Lower leg skin (tissue), 4 donors: ENCODE measurements at regions of chr5 and their contacts with region 1.

Region 1: DNA sequence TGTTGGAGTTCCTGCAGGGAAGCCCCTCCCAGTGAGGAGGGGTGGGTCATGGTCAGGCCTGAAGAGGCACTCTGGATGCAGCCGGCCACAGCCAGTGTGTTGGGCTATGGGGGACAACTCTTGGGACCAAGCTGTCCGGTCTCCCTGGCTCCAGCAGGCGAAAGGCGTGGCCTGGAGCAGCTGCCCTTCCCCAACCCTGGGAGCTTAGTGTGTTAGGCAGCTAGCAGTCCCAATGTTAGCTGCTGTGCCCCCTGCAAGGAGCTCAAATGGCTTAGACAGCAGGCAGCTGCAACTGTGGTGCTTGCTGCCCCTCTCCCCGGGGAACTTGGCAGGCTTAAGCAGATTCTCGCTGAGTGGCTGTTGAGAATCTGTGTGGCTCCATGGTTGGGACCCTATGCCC is 67.5 kb upstream of the ACTBL2 start:
- DNase-seq: no peak
- H3K4me3 ChIP-seq: no peak overlapping the region
- CTCF ChIP-seq: no peak
- POLR2A ChIP-seq: no peak

Region 2: GRCh38 chr5:57577432-57578175 is 27.5 kb after region 1 on chr5:
- intact Hi-C with region 1: loop called (anchors 1 kb)
- DNase-seq: no peak
- H3K4me3 ChIP-seq: no peak overlapping the region
- CTCF ChIP-seq: no peak
- POLR2A ChIP-seq: no peak